Activated T-helper 1 cell treated with anti-CD3 and anti-CD28 coated beads, Interleukin-12 subunit alpha, Interleukin-12 subunit beta, Interleukin-2, Interleukin-4 antibody, amounts not matched to agents 30 ng/mL and 10 ng/mL and 1 ng/mL, durations not matched to agents 14 hours and 24 hours and 36 hours (primary cell): ENCODE measurements at regions of chr2 and their contacts with region 1.

Region 1: DNA sequence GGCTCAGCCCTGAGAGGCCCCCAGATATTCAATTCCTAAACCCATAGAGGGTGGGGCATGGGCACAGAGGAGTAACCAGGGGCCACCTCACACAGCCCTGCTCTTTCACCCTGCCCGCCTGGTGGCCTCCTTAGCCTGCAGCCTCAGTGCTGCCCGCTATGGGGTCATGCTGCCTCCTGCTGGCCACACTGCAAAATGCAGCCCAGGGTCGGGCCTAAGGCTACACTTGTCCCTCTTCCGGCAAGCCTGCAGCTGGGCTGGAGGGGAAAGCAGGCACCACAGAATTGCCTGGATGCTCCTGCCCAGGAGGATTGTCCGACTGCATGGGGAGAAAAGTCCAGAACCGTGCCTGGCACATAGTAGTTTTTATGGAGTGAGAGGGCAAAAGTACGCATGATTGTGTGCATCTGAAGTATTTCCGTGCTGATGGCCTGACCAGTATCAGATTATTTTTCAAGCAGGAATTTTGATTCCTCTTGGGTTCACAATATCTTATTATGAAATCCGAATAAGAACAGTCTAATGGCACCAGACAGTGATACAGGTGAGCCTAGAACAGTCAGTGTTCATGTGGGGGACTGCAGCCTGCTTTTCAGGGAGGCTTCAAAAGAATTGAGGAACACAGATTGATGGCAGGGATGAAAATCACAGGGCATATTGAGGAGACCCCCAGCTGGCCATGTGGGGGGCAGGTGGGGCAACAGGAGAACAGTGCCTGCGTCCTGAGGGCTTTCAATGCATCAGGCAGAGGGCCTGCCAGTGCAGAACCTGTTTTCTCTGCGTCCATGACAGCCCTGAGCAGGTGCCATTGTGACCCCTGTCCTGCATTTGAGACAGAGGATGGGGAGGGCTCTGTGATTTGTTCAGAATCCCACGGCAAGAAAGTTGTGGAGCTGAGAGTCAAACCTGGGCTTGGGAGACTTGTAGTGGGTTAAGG is 51.2 kb upstream of the ALPP start:
- DNase-seq: peak; percentile 75
- H3K4me3 Mint-ChIP-seq: no peak overlapping the region
- H3K27ac Mint-ChIP-seq: no peak overlapping the region
- H3K4me1 Mint-ChIP-seq: peaks cover 11% of the 10 kb centered on the region
- H3K27me3 Mint-ChIP-seq: no peaks in the 10 kb centered on the region

Region 2: DNA sequence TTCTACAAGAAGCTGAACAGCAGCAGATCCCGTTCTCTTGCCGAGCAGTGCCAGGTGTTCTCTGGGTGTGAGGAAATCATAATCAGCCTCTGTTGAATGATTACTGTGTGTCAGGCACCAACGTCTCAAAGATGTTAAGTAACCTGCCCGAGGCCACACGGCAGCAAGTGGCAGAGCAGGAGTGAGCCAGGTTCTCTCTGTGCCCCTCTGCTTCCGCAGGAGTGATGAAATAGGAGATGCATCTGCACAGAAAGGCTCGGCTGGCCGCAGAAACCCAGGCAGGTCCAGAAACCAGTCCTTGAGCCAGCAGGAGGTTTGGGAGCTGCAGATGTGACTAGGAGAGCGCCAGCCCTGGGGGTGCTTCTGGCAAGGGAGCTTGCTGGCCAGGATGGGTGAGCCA is 472.7 kb before region 1 on chr2:
- intact Hi-C with region 1: loop called (anchors 2 kb)
- DNase-seq: no peak
- H3K4me3 Mint-ChIP-seq: no peak overlapping the region
- H3K27ac Mint-ChIP-seq: no peak overlapping the region
- H3K4me1 Mint-ChIP-seq: no peaks in the 10 kb centered on the region
- H3K27me3 Mint-ChIP-seq: peaks cover 1% of the 10 kb centered on the region

Region 3: GRCh38 chr2:231961349-231962166 is 365.8 kb before region 1 on chr2 and contains the start of gene DIS3L2:
- intact Hi-C with region 1: loop called (anchors 1 kb)
- DNase-seq: peak; percentile 75
- H3K4me3 Mint-ChIP-seq: peak within 1 kb of the TSS; percentile 97
- H3K27ac Mint-ChIP-seq: peak within 1 kb of the TSS; percentile 93
- H3K4me1 Mint-ChIP-seq: peaks cover 22% of the 10 kb centered on the region
- H3K27me3 Mint-ChIP-seq: peaks cover under 1% of the 10 kb centered on the region
- total RNA-seq, gene DIS3L2: 27.9 and 33.1 TPM in 2 replicates

Region 4: GRCh38 chr2:232142049-232142448 is 185.3 kb before region 1 on chr2:
- intact Hi-C with region 1: loop called (anchors 1 kb)
- DNase-seq: no peak
- H3K4me3 Mint-ChIP-seq: no peak overlapping the region
- H3K27ac Mint-ChIP-seq: no peak overlapping the region
- H3K4me1 Mint-ChIP-seq: peaks cover 12% of the 10 kb centered on the region
- H3K27me3 Mint-ChIP-seq: no peaks in the 10 kb centered on the region

Region 5: GRCh38 chr2:232292395-232293154 is 34.8 kb before region 1 on chr2:
- intact Hi-C with region 1: loop called (anchors 1 kb)
- DNase-seq: peak; percentile 45
- H3K4me3 Mint-ChIP-seq: no peak overlapping the region
- H3K27ac Mint-ChIP-seq: no peak overlapping the region
- H3K4me1 Mint-ChIP-seq: no peaks in the 10 kb centered on the region
- H3K27me3 Mint-ChIP-seq: no peaks in the 10 kb centered on the region